AG04449 (cell line): ENCODE measurements at regions of chr1 and their contacts with region 1.

Region 1: DNA sequence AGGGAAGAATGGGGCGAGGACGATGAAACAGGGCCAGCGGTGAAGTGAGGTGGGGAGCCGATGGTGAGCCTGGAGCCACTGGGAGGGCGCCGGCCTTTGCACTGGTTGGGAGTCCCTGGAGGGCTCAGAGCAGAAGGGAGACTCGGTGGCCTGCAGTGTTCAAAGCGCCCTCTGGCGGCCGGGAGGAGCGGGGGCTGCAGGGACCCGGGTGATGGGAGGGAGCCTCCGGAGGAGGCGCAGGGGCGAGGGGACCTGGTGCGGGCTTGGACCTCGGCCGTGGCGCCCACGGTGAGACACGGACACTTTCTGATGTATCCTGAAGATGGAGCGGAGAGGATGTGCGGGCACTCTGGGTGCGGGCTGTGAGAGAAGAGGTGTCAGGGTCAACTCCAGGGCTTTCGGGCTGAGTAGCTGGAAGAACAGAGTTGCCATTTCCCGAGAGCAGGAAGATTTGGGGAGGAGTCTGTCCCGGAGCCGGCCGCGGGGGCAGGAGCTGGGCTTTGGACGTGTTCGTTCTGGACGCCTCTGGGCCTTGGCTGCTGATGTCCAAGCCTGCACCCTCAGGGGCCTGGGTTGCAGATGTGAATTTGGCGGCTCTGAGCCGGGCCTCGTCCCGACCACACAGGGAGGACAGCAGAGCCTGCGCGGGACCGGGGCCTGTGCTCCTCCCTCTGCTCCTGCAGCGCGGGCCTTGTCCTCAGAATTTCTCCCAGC is 29.7 kb downstream of the HEYL start:
- DNase-seq: no peak
- H3K4me3 ChIP-seq: no peak overlapping the region
- CTCF ChIP-seq: peak; percentile 83

Region 2: DNA sequence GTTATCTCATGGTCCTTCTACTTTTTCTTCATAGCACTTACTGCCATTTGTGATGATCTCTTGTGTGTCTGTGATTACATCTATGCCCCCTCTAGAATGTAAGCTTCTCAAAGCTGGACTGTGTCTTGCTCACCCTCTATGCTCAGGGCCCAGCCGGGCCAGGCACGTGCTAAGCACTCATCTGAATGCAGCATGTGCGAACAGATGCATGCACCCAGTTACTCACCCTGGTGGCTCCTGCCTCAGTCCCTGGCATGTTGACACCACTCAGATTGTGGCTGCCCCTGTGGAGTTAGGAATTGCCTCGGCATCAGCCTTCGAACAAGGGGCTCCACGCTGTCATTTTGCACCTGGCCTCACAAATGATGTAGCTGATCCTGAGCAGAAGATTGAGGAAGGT is 13.6 kb before region 1 on chr1:
- CTCF ChIA-PET with region 1: interaction called, 43 read pairs
- POLR2A ChIA-PET with region 1: interaction called, 3 read pairs
- DNase-seq: no peak
- H3K4me3 ChIP-seq: no peak overlapping the region
- CTCF ChIP-seq: no peak

Region 3: GRCh38 chr1:39632682-39633417 is 23.1 kb after region 1 on chr1:
- CTCF ChIA-PET with region 1: interaction called, 42 read pairs
- POLR2A ChIA-PET with region 1: no interaction called
- DNase-seq: no peak
- H3K4me3 ChIP-seq: peak overlapping the region; percentile 19
- CTCF ChIP-seq: no peak

Region 4: GRCh38 chr1:39672551-39672947 is 62.8 kb after region 1 on chr1:
- CTCF ChIA-PET with region 1: interaction called, 24 read pairs
- POLR2A ChIA-PET with region 1: no interaction called
- DNase-seq: no peak
- H3K4me3 ChIP-seq: peak overlapping the region; percentile 47
- CTCF ChIP-seq: peak; percentile 50

Region 5: GRCh38 chr1:39720094-39720999 is 110.6 kb after region 1 on chr1:
- CTCF ChIA-PET with region 1: interaction called, 182 read pairs
- POLR2A ChIA-PET with region 1: no interaction called
- DNase-seq: no peak
- H3K4me3 ChIP-seq: no peak overlapping the region
- CTCF ChIP-seq: peak; percentile 28